Right ventricle myocardium superior (tissue), 1 donor: ENCODE measurements at regions of chr12 and their contacts with region 1.

Region 1: DNA sequence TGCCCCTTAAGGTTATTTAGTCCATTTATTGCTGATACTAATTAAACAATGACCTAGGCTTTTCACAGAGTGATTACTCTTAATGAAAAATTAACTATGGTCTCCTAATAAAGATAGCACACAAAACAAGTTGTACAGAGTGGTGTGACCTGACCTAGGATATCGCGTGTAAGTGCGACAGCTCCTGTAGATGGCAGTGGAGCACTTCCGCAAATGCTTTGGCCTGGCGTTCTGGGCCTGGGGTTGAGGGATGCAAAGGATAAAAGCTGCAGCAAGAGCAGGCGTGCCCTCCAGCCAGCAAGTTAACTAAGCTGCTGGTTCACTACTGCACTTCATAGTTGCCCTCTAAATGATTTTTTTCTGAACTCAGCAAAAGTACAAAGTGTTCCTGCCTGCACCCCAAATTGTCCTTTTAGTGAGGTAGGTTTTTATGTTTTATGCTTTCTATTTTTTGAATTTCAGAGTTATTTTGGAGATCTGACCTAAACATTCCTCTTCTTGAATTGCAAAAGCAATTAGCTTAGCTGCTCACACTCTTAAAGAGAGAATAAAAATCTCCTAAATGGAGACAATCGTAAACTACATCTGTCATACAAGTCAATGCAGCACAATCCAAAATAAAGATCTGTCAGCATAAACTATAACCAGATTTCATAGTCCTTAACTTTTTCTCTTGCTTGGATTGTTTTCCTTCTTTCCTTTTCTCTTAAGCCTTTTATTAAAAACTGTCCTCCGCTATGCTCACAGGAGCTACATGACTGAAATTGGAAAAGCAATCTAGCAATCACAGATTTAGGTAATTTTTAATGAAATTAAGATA is 379.6 kb downstream of the LRIG3 start:
- DNase-seq: peak; percentile 69
- ATAC-seq: peak; percentile 89

Region 2: GRCh38 chr12:59087077-59087673 is 546.5 kb after region 1 on chr12:
- intact Hi-C with region 1: loop called (anchors 5 kb)
- DNase-seq: no peak
- ATAC-seq: peak; percentile 39